HepG2 (cell line): ENCODE measurements at regions of chr15 and their contacts with region 1.

Region 1: GRCh38 chr15:43285609-43286037 is 18.9 kb upstream of the TGM5 start:
- DNase-seq: peak; percentile 71
- ATAC-seq: peak; percentile 81
- H3K4me3 ChIP-seq: no peak overlapping the region; a peak in 1 of 6 replicates
- H3K27ac ChIP-seq: no peak overlapping the region
- H3K4me1 ChIP-seq: peaks cover 13% of the 10 kb centered on the region
- H3K27me3 ChIP-seq: peaks cover 1 to 33% of the 10 kb centered on the region in 2 experiments; a peak in 4 of 5 replicates
- CTCF ChIP-seq: peak; percentile 89
- EP300 ChIP-seq: no peak
- POLR2A ChIP-seq: no peak
- RAD21 ChIP-seq: peak; percentile 80

Region 2: DNA sequence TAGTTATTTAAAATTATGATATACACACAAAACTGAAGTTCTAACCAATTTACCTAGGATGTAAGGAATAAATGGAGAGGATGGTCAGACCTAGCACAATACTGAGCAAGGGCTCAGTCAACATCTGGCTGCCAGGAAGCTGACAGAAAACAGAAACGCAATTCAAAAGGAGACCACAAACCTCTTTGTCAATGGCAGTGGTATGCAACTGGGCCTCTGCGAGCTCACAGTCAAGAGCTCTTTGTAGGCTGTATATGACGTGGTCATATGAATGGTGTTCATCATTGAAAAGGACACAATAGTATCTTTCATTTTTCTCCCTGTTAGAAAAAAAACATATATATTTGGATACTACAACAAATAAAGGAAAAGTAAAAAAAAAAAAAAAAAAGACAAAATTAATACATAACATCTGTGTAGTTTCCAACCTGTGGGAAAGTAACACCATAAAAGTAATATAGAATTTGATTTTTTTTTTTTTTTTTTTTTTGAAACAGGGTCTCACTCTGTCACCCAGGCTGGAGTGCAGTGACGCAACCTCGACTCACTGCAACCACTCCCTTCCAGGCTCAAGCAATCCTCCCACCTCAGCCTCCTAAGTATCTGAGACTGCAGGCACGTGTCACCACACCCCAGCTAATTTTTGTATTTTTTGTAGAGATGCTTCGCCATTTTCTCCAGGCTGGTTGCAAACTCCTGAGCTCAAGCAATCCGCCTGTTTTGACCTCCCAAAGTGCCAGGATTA is 217.7 kb before region 1 on chr15:
- CTCF ChIA-PET with region 1: no interaction called
- POLR2A ChIA-PET with region 1: no interaction called
- in situ Hi-C with region 1: no loop called
- intact Hi-C with region 1: no loop called
- DNase-seq: peak; percentile 18
- ATAC-seq: no peak
- H3K4me3 ChIP-seq: no peak overlapping the region
- H3K27ac ChIP-seq: no peak overlapping the region
- H3K4me1 ChIP-seq: no peaks in the 10 kb centered on the region
- H3K27me3 ChIP-seq: no peaks in the 10 kb centered on the region
- CTCF ChIP-seq: no peak
- EP300 ChIP-seq: no peak
- POLR2A ChIP-seq: no peak
- RAD21 ChIP-seq: no peak

Region 3: GRCh38 chr15:43185157-43186017 is 100.2 kb before region 1 on chr15 and contains the start of gene CCNDBP1:
- CTCF ChIA-PET with region 1: interaction called, 11 read pairs
- POLR2A ChIA-PET with region 1: no interaction called
- in situ Hi-C with region 1: no loop called
- intact Hi-C with region 1: loop called (anchors 1 kb)
- DNase-seq: peak; percentile 88
- ATAC-seq: peak; percentile 98
- H3K4me3 ChIP-seq: peak within 1 kb of the TSS; percentile 86 to 89 (median 87)
- H3K27ac ChIP-seq: peak within 1 kb of the TSS; percentile 77
- H3K4me1 ChIP-seq: peaks cover 10% of the 10 kb centered on the region
- H3K27me3 ChIP-seq: no peaks in the 10 kb centered on the region
- CTCF ChIP-seq: peak; percentile 51
- EP300 ChIP-seq: no peak
- POLR2A ChIP-seq: peak; percentile 91 to 92
- RAD21 ChIP-seq: no peak
- total RNA-seq, gene CCNDBP1: 24.8 and 33.1 TPM in 2 replicates

Region 4: GRCh38 chr15:43204016-43204901 is 81.4 kb before region 1 on chr15:
- CTCF ChIA-PET with region 1: interaction called, 11 read pairs
- POLR2A ChIA-PET with region 1: no interaction called
- in situ Hi-C with region 1: no loop called
- intact Hi-C with region 1: loop called (anchors 1 kb)
- DNase-seq: peak; percentile 53
- ATAC-seq: peak; percentile 77
- H3K4me3 ChIP-seq: peak overlapping the region in 1 of 3 experiments; percentile 27; a peak in 1 of 6 replicates
- H3K27ac ChIP-seq: no peak overlapping the region
- H3K4me1 ChIP-seq: peaks cover 6% of the 10 kb centered on the region
- H3K27me3 ChIP-seq: peaks cover 0 to 39% of the 10 kb centered on the region in 2 experiments; a peak in 2 of 5 replicates
- CTCF ChIP-seq: peak; percentile 79
- EP300 ChIP-seq: no peak
- POLR2A ChIP-seq: no peak
- RAD21 ChIP-seq: no peak

Region 5: GRCh38 chr15:43225201-43225949 is 60.2 kb before region 1 on chr15:
- CTCF ChIA-PET with region 1: interaction called, 45 read pairs
- POLR2A ChIA-PET with region 1: no interaction called
- in situ Hi-C with region 1: loop called (anchors 10 kb)
- intact Hi-C with region 1: loop called (anchors 1 kb)
- DNase-seq: peak; percentile 63
- ATAC-seq: peak; percentile 97
- H3K4me3 ChIP-seq: no peak overlapping the region
- H3K27ac ChIP-seq: no peak overlapping the region
- H3K4me1 ChIP-seq: 0 out of 2 replicates have a peak, but pooled peaks cover 11% of the 10 kb centered on the region
- H3K27me3 ChIP-seq: peaks cover 0 to 8% of the 10 kb centered on the region in 2 experiments; a peak in 3 of 5 replicates
- CTCF ChIP-seq: peak; percentile 85
- EP300 ChIP-seq: no peak
- POLR2A ChIP-seq: no peak
- RAD21 ChIP-seq: peak; percentile 60; the same call in 1 of the 2 replicates

Region 6: GRCh38 chr15:43239732-43240491 is 45.7 kb before region 1 on chr15:
- CTCF ChIA-PET with region 1: interaction called, 3 read pairs
- POLR2A ChIA-PET with region 1: no interaction called
- in situ Hi-C with region 1: loop called (anchors 10 kb)
- intact Hi-C with region 1: no loop called
- DNase-seq: peak; percentile 77
- ATAC-seq: peak; percentile 79
- H3K4me3 ChIP-seq: peak overlapping the region in 2 of 3 experiments; percentile 15 to 35; a peak in 1 of 6 replicates
- H3K27ac ChIP-seq: no peak overlapping the region
- H3K4me1 ChIP-seq: peaks cover 27% of the 10 kb centered on the region
- H3K27me3 ChIP-seq: peaks cover 0 to 28% of the 10 kb centered on the region in 2 experiments; a peak in 3 of 5 replicates
- CTCF ChIP-seq: no peak
- EP300 ChIP-seq: no peak
- POLR2A ChIP-seq: no peak
- RAD21 ChIP-seq: no peak